GM10248 (cell line): ENCODE measurements at regions of chr20 and their contacts with region 1.

Region 1: DNA sequence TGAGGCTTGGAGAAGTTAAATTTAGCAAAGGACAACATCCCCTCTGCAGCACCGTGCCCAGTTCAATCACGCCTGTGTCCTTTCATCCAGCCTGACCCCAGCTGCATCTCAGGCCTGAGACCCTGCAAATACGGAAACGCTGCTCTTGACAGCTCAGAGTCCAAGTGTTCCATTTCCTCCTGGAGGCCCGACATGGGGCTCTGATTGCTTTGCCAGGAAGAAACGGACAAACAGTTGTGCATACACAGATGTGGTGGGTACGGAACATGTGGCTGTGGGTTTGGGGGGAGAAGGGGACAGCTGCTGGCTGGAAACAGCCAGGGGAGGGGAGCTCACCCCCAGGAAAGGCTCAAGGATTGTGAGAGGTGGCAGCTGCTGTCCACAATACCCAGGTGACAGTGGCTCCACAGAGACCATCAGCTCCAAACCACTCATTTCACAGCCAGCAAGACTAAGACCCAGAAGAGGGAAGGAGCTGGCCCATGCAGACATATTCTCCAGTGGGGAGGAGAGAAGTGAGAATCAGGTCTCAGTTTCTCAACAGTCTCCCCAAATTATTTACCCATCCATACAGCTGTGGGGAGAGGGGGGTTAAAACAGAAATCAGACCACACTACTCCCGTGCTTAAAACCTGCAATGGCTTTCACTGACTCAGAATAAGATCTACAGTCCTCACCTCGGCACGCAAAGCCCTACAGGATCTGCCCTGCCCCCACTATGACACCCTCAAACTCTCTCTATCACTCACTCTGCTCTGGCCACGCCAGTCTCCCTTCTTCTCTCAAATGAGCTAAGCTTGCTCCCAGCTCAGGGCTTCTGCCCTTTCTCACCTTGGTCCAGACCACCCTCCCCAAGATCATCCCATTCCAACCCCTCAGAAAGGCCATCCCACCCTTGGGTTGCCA is 89.1 kb downstream of the PREX1 start:
- DNase-seq: peak; percentile 77
- CTCF ChIP-seq: no peak

Region 2: DNA sequence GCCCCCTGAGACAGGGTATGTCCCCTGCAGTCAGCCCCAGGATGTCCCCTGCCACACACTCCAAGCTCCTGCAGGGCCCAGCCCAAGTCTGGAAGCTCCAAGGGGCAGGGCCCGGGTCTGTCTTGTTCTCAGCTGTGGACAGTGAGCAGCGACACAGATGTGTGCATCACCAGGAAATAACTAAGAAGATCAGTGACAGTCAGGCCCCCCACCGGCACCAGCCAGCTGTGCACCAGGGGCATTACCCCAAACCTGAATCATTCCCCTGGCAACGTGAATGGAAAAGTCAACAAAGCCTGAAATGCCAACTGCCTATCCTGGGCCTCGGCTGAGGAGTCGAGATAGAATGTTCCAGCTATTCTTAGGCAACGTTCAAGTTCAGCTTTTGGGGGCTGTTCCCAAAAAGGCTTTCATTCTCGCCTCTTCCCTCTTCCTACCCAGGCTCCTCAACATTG is 15.9 kb before region 1 on chr20:
- CTCF ChIA-PET with region 1: interaction called, 17 read pairs
- POLR2A ChIA-PET with region 1: interaction called, 7 read pairs
- DNase-seq: no peak
- CTCF ChIP-seq: no peak

Region 3: DNA sequence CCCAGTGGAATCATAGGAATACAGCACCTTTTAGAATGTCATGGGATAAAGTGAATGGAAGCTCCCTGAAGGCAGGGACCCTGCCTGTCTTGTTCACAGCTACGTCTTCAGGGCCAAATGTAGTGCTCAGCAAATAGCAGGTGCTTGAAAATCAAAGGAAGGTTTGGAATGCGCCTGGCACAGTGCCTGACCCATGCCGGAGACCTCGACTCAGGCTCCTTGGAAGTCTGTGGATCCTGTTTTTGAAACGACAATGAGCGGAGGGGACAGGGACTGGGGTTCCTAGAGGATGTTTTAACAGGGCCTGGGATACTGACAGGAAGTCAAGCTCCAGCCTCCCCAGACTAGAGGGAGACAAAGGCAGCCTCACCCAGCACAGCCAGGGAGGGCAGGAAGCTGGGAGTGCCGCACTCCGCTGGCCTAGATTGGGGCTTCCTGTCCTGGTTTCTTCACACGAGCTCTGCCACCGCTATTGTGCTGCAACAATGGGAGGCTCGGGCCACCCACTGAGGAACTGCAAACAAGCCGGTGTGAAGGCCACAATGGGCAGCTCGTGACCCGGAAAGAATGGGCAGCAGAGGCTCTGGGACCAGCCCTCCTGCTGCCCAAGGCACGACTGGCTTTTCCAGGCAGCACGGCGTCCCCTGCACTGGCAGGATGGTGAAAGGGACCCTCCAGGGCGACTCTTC is 12.4 kb after region 1 on chr20:
- CTCF ChIA-PET with region 1: interaction called, 20 read pairs
- POLR2A ChIA-PET with region 1: interaction called, 3 read pairs
- DNase-seq: no peak
- CTCF ChIP-seq: no peak

Region 4: DNA sequence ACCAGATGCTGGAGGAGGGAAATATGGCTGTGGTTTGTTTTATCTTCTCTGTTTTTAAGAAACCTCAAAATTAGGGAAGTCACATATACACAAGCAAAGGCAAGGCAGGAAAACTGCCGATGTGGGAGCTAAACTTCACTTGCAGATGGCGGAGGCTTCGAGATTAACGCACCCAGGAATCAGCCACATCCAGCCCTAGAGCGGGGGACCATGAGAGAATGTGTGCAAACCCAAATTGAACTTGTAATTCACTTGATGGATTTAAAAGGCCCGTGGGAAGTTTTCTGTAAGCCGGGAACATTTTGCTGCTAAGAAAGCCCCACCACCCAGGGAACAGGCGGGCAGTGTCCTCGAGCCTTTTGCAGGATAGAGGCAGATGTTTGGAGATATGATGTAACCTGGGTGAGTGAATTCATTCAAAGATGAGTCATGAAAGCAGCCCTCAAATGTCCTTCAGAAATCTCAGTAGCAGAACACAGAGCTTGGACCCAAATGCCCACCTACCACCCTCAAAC is 49.3 kb after region 1 on chr20:
- CTCF ChIA-PET with region 1: interaction called, 3 read pairs
- POLR2A ChIA-PET with region 1: interaction called, 10 read pairs
- DNase-seq: no peak
- CTCF ChIP-seq: no peak

Region 5: DNA sequence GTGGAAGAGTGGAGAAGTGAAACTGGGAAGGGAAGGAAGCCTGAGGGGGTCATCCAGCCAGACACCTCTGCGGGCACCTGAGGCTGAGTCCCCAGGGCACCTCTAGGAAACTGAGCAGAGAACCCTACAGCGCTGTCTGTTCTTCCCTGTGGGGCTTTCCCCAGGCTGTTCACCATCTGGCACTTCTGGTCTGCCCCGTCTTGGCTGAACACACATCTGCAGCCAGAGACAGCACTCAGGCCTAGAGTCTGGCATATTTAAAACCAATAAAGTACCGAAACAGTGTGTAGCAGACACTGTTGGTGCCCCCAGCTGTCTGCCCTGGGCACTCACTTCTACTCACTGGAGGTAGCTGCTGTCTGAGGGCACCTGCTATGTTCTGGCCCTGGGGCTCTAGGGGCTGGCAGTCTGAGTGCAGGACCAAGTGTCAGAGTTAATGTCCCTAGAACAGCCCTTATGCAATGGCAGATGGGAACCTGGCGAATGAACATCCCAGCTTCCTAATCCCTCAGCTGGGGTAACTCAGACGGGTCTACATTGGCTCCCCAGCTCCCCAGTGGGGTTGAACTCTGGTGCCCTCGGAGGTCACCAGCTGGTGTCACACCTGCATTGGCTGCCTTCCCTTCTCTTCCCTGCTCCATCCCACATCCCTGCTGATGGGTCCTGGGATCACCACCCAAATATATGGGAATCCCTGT is 173.6 kb after region 1 on chr20:
- CTCF ChIA-PET with region 1: no interaction called
- POLR2A ChIA-PET with region 1: no interaction called
- DNase-seq: peak; percentile 50
- CTCF ChIP-seq: no peak